WTC11 (cell line): ENCODE measurements at regions of chr6 and their contacts with region 1.

Region 1: GRCh38 chr6:139888681-139889122 is 514.3 kb upstream of the CITED2 start:
- DNase-seq: peak; percentile 18
- ATAC-seq: peak; percentile 89
- H3K4me3 Mint-ChIP-seq: peak overlapping the region; percentile 37
- H3K27ac Mint-ChIP-seq: peak overlapping the region; percentile 99
- H3K4me1 Mint-ChIP-seq: peaks cover 67% of the 10 kb centered on the region
- H3K27me3 Mint-ChIP-seq: no peaks in the 10 kb centered on the region
- CTCF ChIP-seq: no peak

Region 2: GRCh38 chr6:139369568-139370282 is 519.0 kb before region 1 on chr6:
- CTCF ChIA-PET with region 1: interaction called, 13 read pairs
- POLR2A ChIA-PET with region 1: interaction called, 18 read pairs
- DNase-seq: no peak
- ATAC-seq: no peak
- H3K4me3 Mint-ChIP-seq: peak overlapping the region; percentile 36; the same call in 1 of the 2 replicates
- H3K27ac Mint-ChIP-seq: peak overlapping the region; percentile 81
- H3K4me1 Mint-ChIP-seq: peaks cover 71% of the 10 kb centered on the region
- H3K27me3 Mint-ChIP-seq: no peaks in the 10 kb centered on the region
- CTCF ChIP-seq: peak; percentile 34; the same call in 1 of the 2 replicates